BJ (cell line): ENCODE measurements at regions of chr18 and their contacts with region 1.

Region 1: GRCh38 chr18:45820106-45820745 is 5.2 kb upstream of the SIGLEC15 start:
- DNase-seq: no peak
- H3K4me3 ChIP-seq: no peak overlapping the region
- H3K27me3 ChIP-seq: no peaks in the 10 kb centered on the region
- CTCF ChIP-seq: no peak

Region 2: GRCh38 chr18:45722899-45723298 is 97.3 kb before region 1 on chr18:
- CTCF ChIA-PET with region 1: no interaction called
- POLR2A ChIA-PET with region 1: no interaction called
- DNase-seq: no peak
- H3K4me3 ChIP-seq: no peak overlapping the region
- H3K27me3 ChIP-seq: 0 out of 2 replicates have a peak, but pooled peaks cover 2% of the 10 kb centered on the region
- CTCF ChIP-seq: peak; percentile 87

Region 3: DNA sequence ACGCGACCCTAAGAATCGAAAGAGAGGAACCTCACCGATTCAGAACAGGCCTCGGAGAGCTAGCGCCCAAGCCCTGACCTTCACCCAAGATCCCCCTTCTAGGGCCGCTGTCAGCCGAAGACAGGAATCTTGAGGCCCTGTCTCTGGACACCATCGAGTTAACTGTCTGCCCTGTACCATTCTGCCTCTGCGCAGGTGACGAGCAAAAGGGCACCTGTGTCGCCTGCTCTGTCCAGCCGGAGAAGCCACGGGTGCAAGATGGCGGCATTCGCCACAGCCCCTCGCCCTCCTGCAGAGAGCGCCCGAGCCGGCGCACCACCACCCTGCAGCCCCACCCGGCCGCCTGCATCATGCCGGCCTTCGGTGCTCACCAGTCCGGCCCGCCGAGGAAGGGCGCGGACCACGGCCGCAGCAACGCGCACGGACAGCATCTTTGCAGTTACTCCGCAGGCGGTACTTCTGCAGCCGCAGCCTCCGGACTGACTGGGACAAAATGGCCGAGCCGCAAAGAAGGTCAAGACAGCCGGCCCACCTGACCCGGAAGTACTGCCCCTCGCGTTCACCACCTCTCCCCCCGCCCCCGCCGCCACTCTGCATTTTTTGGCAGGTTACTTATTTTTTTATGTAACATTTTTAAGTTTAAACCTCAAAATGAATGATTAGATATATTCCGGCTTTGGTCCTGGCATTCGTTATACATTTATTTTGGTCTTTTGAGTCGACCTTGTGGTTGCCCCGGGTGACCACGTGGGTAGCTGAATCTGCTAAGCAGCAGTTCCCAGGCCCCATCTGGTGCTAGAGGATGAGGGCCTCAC is 277.8 kb after region 1 on chr18 and contains the start of gene ATP5F1A:
- CTCF ChIA-PET with region 1: no interaction called
- POLR2A ChIA-PET with region 1: interaction called, 12 read pairs
- DNase-seq: no peak
- H3K4me3 ChIP-seq: peak within 1 kb of the TSS; percentile 72
- H3K27me3 ChIP-seq: no peaks in the 10 kb centered on the region
- CTCF ChIP-seq: peak; percentile 16; the same call in 1 of the 2 replicates
- polyA plus RNA-seq, gene ATP5F1A: 557 and 639 TPM in 2 replicates